AG04449 (cell line): ENCODE measurements at regions of chr18 and their contacts with region 1.

Region 1: GRCh38 chr18:54983041-54983686 is 23.9 kb upstream of the CCDC68 start:
- DNase-seq: no peak
- H3K4me3 ChIP-seq: no peak overlapping the region
- CTCF ChIP-seq: peak; percentile 51

Region 2: GRCh38 chr18:54679318-54680149 is 303.6 kb before region 1 on chr18:
- CTCF ChIA-PET with region 1: interaction called, 149 read pairs
- POLR2A ChIA-PET with region 1: no interaction called
- DNase-seq: peak; percentile 49
- H3K4me3 ChIP-seq: no peak overlapping the region
- CTCF ChIP-seq: peak; percentile 47

Region 3: GRCh38 chr18:54684784-54685183 is 298.4 kb before region 1 on chr18:
- CTCF ChIA-PET with region 1: interaction called, 149 read pairs
- POLR2A ChIA-PET with region 1: no interaction called
- DNase-seq: no peak
- H3K4me3 ChIP-seq: no peak overlapping the region
- CTCF ChIP-seq: no peak

Region 4: DNA sequence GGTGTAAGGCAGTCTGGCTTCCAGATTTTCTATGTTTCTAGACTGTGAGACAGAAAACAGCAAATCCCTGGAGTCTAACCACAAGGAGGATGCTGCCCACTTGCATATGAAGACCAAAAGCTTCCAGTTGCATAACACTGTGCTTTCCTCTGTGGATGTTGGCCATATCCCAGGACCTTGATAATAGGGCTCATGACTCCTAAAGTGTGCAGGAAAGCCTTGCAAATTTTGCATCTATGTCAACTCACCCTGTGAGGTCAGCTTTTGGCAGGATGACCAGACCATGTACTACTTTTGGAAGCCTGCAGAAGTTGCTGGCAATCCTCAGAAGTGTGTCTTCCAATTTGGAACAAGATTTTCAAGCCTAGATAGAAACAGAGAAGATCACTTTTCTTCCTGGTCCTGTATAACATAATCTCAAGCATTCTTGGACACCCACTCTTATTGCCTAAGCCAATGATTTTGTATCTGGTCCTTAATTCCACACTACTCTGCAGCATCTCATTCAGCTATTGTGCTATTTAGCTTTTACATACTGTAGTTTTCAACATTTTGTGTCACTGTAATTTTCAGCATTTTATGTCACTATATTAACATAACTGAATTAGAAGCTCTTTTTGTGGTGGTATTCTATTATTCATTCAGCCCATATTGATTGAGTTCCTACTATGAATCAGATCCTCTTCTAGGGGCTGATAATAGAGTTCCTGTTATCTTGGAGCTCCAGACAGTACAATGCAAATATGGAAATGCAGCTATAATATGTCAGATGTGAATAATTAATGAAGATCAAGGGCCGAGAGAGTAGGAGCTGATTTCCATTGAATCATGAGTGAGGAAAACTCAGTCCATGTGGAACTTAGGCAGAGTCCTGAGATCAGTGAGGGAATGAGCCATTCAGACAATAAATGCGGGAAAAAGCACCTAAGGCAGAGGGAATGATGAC is 240.2 kb before region 1 on chr18:
- CTCF ChIA-PET with region 1: interaction called, 11 read pairs
- POLR2A ChIA-PET with region 1: no interaction called
- DNase-seq: peak; percentile 98
- H3K4me3 ChIP-seq: no peak overlapping the region
- CTCF ChIP-seq: no peak

Region 5: DNA sequence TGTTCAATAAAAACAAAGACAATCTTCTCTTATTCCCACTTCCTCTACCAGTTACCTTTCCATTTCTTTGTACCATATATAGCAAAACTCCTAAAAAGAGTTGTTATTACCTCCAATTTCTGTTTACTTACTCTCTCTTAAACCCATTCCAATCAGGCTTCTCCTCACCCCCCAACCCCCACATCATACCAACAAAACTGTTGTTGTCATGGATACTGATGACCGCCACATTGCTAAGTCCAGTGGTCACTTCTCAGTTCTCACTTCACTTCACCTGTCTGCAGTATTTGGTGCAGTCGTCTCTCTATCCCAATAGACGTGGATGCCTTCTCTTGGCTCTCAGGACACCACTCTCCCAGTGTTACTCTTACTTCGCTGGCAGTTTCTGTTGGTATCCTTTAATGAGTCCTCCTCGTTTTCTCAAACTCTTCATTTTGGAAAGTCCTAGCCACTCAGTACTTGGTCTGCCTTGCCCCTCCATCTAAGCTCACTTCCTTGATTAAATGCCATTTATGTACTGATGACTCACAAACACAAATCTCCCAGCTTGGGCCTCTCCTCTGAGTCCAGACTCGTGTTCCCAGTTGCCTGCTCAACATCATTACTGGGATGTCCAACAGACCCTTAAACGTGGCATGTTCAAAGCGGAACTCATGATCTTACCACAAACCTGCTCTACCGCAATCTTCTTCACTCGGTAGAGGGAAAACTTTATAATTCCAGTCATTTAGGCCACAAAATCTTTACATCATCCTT is 10.3 kb before region 1 on chr18:
- CTCF ChIA-PET with region 1: interaction called, 23 read pairs
- POLR2A ChIA-PET with region 1: no interaction called
- DNase-seq: no peak
- H3K4me3 ChIP-seq: no peak overlapping the region
- CTCF ChIP-seq: no peak